Common myeloid progenitor, CD34-positive (primary cell): ENCODE measurements at regions of chr10 and their contacts with region 1.

Region 1: GRCh38 chr10:17756557-17757217 is 4.7 kb downstream of the TMEM236 start:
- DNase-seq: peak in 2 of 3 donors; percentile 73 to 81
- H3K4me3 ChIP-seq: peak overlapping the region in 3 of 7 experiments; percentile 1 to 64 (median 34)
- H3K27ac ChIP-seq: no peak overlapping the region
- H3K4me1 ChIP-seq: peaks cover 0 to 10% (median 7%) of the 10 kb centered on the region in 4 experiments
- H3K27me3 ChIP-seq: no peaks in the 10 kb centered on the region

Region 2: GRCh38 chr10:17744341-17744861 is 12.3 kb before region 1 on chr10:
- CTCF ChIA-PET with region 1: interaction called, 11 read pairs
- POLR2A ChIA-PET with region 1: interaction called, 3 read pairs
- DNase-seq: peak; percentile 58 to 95 (median 90)
- H3K4me3 ChIP-seq: peak overlapping the region in 4 of 7 experiments; percentile 31 to 64 (median 52)
- H3K27ac ChIP-seq: no peak overlapping the region
- H3K4me1 ChIP-seq: peaks cover 14 to 36% (median 28%) of the 10 kb centered on the region in 4 experiments
- H3K27me3 ChIP-seq: no peaks in the 10 kb centered on the region

Region 3: GRCh38 chr10:17910125-17910789 is 153.6 kb after region 1 on chr10:
- CTCF ChIA-PET with region 1: no interaction called
- POLR2A ChIA-PET with region 1: no interaction called
- DNase-seq: peak; percentile 62 to 73 (median 70)
- H3K4me3 ChIP-seq: no peak overlapping the region
- H3K27ac ChIP-seq: no peak overlapping the region
- H3K4me1 ChIP-seq: no peaks in the 10 kb centered on the region
- H3K27me3 ChIP-seq: no peaks in the 10 kb centered on the region

Region 4: DNA sequence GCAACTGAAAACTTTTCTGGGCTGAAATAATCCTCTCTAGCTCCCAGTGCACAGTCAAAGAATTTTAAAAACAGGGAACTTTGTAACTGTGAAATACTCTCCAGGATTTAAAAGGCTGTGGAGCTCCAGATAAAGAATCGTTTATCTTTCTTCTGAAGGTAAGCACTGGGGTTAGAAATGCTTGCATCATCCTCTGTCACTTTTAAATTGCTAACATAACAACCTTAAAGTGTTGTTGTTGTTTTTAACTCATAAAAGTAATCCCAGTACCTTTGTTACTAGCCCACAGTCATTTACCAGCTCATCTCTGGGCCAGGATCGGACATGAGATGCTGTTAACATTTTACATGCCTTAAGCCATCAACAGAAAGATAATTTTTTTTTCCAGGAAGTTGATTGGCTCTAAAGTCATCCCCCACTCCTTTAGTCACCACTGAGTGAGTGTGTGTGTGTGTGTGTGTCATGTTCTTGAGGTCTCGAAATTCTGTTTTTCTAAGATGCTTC is 195.2 kb after region 1 on chr10 and contains the start of gene SLC39A12:
- CTCF ChIA-PET with region 1: no interaction called
- POLR2A ChIA-PET with region 1: no interaction called
- DNase-seq: no peak
- H3K4me3 ChIP-seq: no peak within 1 kb of the TSS
- H3K27ac ChIP-seq: no peak within 1 kb of the TSS
- H3K4me1 ChIP-seq: no peaks in the 10 kb centered on the region
- H3K27me3 ChIP-seq: peaks cover 0 to 6% (median 0%) of the 10 kb centered on the region in 5 experiments